ENCODE measurements at regions of chr3 and their contacts with region 1.

Region 1: GRCh38 chr3:196969660-196970546 is 1.3 kb upstream of the PIGZ start:
- DNase-seq: peak; percentile 73
- H3K4me3 Mint-ChIP-seq: peak overlapping the region; percentile 77
- H3K27ac Mint-ChIP-seq: peak overlapping the region; percentile 67
- H3K4me1 Mint-ChIP-seq: peaks cover 22% of the 10 kb centered on the region
- H3K27me3 Mint-ChIP-seq: peaks cover 46% of the 10 kb centered on the region

Region 2: DNA sequence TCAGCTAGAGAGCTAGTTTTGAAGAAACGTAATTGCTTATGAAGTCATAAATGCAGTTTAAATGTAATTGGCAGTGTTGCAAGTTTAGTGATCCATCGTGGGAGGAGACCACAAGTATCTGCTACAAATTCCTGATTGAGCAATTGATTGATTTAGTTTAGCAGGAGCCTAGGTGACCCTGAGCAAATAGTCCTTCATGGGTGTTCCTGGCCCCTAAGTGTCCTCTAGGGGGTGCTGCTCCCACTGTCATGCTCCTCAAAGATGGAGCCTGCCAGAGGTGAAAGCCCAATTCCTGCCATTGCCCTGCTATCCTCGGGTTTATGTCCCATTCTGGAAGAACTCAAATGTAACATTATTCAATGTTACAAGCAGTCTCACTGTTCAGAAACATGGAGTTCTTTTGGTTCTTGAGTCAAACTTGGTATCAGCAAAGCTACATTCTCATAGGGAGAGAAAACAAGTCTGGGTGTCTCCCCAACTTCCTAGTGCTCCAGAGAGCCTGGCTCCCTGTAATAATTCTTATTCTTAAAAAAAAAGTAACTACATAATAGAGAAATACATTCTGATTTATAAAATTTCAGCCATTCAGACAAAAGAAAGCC is 132.0 kb before region 1 on chr3:
- CTCF ChIA-PET with region 1: interaction called, 15 read pairs
- DNase-seq: peak; percentile 84
- H3K4me3 Mint-ChIP-seq: no peak overlapping the region
- H3K27ac Mint-ChIP-seq: no peak overlapping the region
- H3K4me1 Mint-ChIP-seq: peaks cover 7% of the 10 kb centered on the region
- H3K27me3 Mint-ChIP-seq: no peaks in the 10 kb centered on the region

Region 3: GRCh38 chr3:196951371-196951770 is 18.5 kb before region 1 on chr3:
- CTCF ChIA-PET with region 1: interaction called, 10 read pairs
- DNase-seq: no peak
- H3K4me3 Mint-ChIP-seq: no peak overlapping the region
- H3K27ac Mint-ChIP-seq: no peak overlapping the region
- H3K4me1 Mint-ChIP-seq: no peaks in the 10 kb centered on the region
- H3K27me3 Mint-ChIP-seq: peaks cover 26% of the 10 kb centered on the region

Measured in activated naive CD4-positive, alpha-beta T cell treated with anti-CD3 and anti-CD28 coated beads, Interleukin-2, amount 10 ng/mL, durations not matched to agents 7 days and 5 days (primary cell).